ENCODE measurements at regions of chr4 and their contacts with region 1.

Region 1: GRCh38 chr4:56990109-56990905 is 11.6 kb downstream of the POLR2B start:
- DNase-seq: no peak
- ATAC-seq: no peak
- H3K4me3 Mint-ChIP-seq: no peak overlapping the region
- H3K27ac Mint-ChIP-seq: peak overlapping the region; percentile 56
- H3K4me1 Mint-ChIP-seq: peaks cover 34% of the 10 kb centered on the region
- H3K27me3 Mint-ChIP-seq: no peaks in the 10 kb centered on the region

Region 2: GRCh38 chr4:56908206-56909085 is 81.9 kb before region 1 on chr4:
- CTCF ChIA-PET with region 1: no interaction called
- POLR2A ChIA-PET with region 1: no interaction called
- intact Hi-C with region 1: no loop called
- DNase-seq: peak; percentile 82
- ATAC-seq: peak; percentile 69
- H3K4me3 Mint-ChIP-seq: peak overlapping the region; percentile 99
- H3K27ac Mint-ChIP-seq: peak overlapping the region; percentile 98
- H3K4me1 Mint-ChIP-seq: peaks cover 44% of the 10 kb centered on the region
- H3K27me3 Mint-ChIP-seq: no peaks in the 10 kb centered on the region

Region 3: GRCh38 chr4:57020467-57021101 is 30.3 kb after region 1 on chr4:
- CTCF ChIA-PET with region 1: interaction called, 3 read pairs
- POLR2A ChIA-PET with region 1: no interaction called
- intact Hi-C with region 1: loop called in 1 of 2 experiments (anchors 5 kb)
- DNase-seq: no peak
- ATAC-seq: no peak
- H3K4me3 Mint-ChIP-seq: no peak overlapping the region
- H3K27ac Mint-ChIP-seq: peak overlapping the region; percentile 45
- H3K4me1 Mint-ChIP-seq: peaks cover 2% of the 10 kb centered on the region
- H3K27me3 Mint-ChIP-seq: no peaks in the 10 kb centered on the region

Region 4: DNA sequence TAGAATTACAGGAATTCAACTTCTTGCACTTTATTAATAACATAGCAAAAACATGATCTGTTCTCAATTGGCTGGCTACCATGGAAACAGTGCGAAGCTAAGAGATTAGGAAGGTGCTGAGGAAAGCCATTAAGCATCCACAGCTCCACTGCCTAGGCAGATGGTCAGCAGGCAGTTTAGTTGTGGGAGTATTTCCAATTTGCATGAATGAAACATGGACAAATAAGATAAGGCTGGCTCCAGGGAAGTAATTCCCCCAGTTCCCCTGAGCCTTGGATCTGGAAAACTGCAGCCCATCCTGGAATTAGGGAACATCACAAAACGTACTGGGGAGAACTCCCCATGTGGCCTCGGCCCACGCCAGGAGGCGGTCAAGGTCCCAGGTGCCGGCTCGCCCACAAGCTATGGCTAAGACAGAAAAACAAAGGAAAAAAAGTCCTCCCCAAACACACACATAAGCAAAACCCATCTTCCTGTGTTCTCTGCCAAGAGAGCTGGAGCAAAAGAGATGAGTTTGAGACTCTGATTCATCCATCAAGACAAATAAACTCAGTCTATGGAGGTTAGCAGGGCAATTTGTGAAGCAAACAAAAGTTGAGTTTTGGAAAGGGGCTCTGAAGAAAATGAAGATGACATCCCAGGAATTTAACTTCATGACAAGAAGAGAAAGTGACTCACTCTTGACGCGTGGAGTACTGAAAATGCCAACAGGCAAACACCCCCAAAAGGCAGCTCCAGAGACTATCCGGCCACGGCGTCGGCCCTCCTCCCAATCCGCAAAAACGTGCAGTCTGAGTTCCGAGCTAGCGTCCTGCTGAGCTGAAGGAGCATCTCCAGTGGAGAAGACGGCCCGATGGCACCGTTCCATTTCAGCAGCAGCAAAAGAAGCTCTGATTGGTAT is 74.8 kb after region 1 on chr4:
- CTCF ChIA-PET with region 1: no interaction called
- POLR2A ChIA-PET with region 1: no interaction called
- intact Hi-C with region 1: no loop called
- DNase-seq: no peak
- ATAC-seq: no peak
- H3K4me3 Mint-ChIP-seq: no peak overlapping the region
- H3K27ac Mint-ChIP-seq: no peak overlapping the region
- H3K4me1 Mint-ChIP-seq: no peaks in the 10 kb centered on the region
- H3K27me3 Mint-ChIP-seq: peaks cover 2% of the 10 kb centered on the region

Region 5: DNA sequence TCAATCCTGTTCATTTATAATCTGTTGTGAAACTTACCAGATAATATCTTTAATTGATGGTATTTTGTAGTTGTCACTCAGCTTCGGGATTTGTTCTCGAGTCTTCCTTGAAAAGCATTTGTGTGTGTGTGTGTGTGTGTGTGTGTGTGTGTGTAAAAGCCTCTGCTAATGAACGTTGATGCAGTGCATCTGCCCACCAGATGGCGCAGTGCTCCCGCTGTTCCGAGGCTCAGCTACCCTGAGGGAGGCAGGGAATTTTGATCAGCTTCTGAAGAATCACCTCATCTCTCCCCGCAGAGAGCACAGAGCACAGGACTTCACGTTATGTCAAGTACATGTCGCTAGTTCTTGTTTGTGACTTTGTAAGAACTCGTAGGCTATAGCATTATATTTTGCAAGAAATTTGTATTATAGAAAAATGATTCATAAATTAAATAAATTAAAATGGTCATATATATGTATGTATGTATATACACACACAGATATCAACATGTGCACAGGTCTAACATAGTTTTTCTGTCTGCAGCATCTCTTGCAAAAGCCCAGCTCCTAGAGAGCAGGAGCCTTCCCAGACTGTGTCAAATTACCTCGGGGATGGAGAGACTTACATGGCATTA is 436.6 kb after region 1 on chr4:
- CTCF ChIA-PET with region 1: no interaction called
- POLR2A ChIA-PET with region 1: no interaction called
- intact Hi-C with region 1: no loop called
- DNase-seq: peak; percentile 72
- ATAC-seq: no peak
- H3K4me3 Mint-ChIP-seq: no peak overlapping the region
- H3K27ac Mint-ChIP-seq: no peak overlapping the region
- H3K4me1 Mint-ChIP-seq: no peaks in the 10 kb centered on the region
- H3K27me3 Mint-ChIP-seq: no peaks in the 10 kb centered on the region

Measured in activated CD4-positive, alpha-beta T cell treated with anti-CD3 and anti-CD28 coated beads for 36 hours (primary cell).